HEK293 (cell line): ENCODE measurements at regions of chr16 and their contacts with region 1.

Region 1: GRCh38 chr16:88785106-88785924 is at the start of gene PIEZO1:
- H3K4me3 ChIP-seq: peak within 1 kb of the TSS; percentile 53
- H3K27ac ChIP-seq: peak within 1 kb of the TSS; percentile 76; the same call in 1 of the 2 replicates
- H3K4me1 ChIP-seq: peaks cover 22% of the 10 kb centered on the region
- CTCF ChIP-seq: peak; percentile 94

Region 2: DNA sequence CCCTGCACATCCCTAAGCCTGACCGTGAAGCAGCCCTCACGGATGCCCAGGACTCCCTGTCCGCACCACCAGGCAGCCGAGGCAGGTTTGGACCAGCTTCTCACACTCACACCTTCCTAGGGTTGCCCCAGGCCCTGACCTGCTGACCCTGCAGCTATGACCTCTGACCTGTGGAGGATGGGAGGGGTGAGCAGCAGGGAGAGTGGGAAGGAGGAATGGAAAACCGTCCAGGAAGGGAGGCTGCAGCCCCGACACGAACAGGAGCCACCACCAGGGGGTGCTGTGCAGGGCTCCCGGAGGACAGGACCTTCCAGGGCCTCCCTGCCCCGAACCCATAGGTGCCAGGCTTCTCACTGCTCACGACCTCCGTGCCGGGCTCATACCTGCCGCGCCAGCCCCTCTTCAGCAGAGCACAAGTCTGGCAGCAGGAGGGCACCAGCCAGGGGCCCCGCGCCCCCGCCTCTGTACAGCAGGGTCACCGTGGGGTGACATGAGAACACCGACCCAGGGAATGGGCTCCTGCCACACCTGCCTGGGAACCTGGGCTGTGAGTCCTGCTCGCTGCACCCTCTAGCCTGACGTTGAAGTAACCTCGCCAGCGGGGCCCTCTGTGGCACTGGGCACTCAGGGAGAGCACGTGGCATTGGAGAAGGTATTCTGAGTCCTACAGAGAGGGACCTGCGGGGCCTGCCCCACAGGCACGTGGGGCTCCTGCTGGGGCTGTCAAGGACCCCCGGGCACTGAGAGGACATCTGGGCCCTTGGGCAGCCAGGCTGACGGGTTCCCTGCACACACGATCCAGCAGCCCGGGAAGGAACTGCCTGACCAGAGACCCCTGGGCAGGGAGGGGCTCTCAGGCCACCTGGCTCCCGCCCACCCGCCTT is 41.4 kb before region 1 on chr16:
- CTCF ChIA-PET with region 1: interaction called, 16 read pairs
- POLR2A ChIA-PET with region 1: interaction called, 3 read pairs
- H3K4me3 ChIP-seq: no peak overlapping the region
- H3K27ac ChIP-seq: no peak overlapping the region
- H3K4me1 ChIP-seq: no peaks in the 10 kb centered on the region
- CTCF ChIP-seq: peak; percentile 81

Region 3: DNA sequence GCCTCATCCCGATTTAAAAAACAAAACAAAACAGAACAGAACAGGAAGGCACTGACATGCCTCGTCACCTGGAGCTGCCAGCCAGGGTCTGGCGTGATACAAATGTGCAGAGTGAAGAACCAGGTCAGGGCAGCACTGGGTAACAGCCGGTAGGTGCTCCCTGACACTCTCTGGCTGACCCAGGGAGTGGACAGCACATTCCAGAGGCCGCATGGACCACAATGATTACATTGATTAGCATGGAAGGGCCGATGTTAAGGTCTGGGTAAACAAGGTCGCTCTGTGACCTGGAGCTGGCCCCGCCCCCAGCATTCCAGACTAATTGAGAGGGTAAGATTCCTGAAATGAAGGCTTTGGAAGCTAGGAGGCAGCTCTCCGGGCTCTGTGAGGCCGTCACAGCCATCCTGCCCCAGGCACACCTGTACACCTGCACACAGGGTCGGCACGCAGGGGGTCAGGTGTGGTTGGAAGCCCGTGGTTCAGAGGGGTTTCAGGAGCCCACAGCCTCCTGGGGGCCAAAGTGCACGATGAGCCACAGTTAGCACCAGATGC is 21.7 kb before region 1 on chr16:
- CTCF ChIA-PET with region 1: interaction called, 16 read pairs
- POLR2A ChIA-PET with region 1: interaction called, 97 read pairs
- H3K4me3 ChIP-seq: no peak overlapping the region
- H3K27ac ChIP-seq: no peak overlapping the region
- H3K4me1 ChIP-seq: peaks cover 13% of the 10 kb centered on the region
- CTCF ChIP-seq: no peak